Body of pancreas (tissue), 4 donors: ENCODE measurements at regions of chr15 and their contacts with region 1.

Region 1: GRCh38 chr15:45468294-45468693 is 54.3 kb downstream of the SLC30A4 start:
- DNase-seq: no peak
- ATAC-seq: no peak
- H3K4me3 ChIP-seq: no peak overlapping the region
- H3K27ac ChIP-seq: no peak overlapping the region
- H3K4me1 ChIP-seq: no peaks in the 10 kb centered on the region
- H3K27me3 ChIP-seq: no peaks in the 10 kb centered on the region
- CTCF ChIP-seq: no peak
- POLR2A ChIP-seq: no peak

Region 2: GRCh38 chr15:45346381-45346780 is 121.9 kb before region 1 on chr15:
- intact Hi-C with region 1: no loop called
- DNase-seq: no peak
- ATAC-seq: no peak
- H3K4me3 ChIP-seq: no peak overlapping the region
- H3K27ac ChIP-seq: peak overlapping the region in 2 of 4 donors; percentile 48 to 69
- H3K4me1 ChIP-seq: peaks cover 61% of the 10 kb centered on the region
- H3K27me3 ChIP-seq: no peaks in the 10 kb centered on the region
- CTCF ChIP-seq: no peak
- POLR2A ChIP-seq: no peak

Region 3: GRCh38 chr15:45611305-45611704 is 143.0 kb after region 1 on chr15:
- intact Hi-C with region 1: loop called (anchors 10 kb)
- DNase-seq: no peak
- ATAC-seq: no peak
- H3K4me3 ChIP-seq: no peak overlapping the region
- H3K27ac ChIP-seq: no peak overlapping the region
- H3K4me1 ChIP-seq: no peaks in the 10 kb centered on the region
- H3K27me3 ChIP-seq: no peaks in the 10 kb centered on the region
- CTCF ChIP-seq: peak in 3 of 7 experiments; percentile 30 to 32 (median 31)
- POLR2A ChIP-seq: no peak